ENCODE measurements at regions of chr1 and their contacts with region 1.

Region 1: GRCh38 chr1:165666152-165666825 is 32.1 kb downstream of the ALDH9A1 start:
- DNase-seq: peak; percentile 12 to 42 (median 16)
- H3K4me3 ChIP-seq: peak overlapping the region in 2 of 3 experiments; percentile 36 to 58
- H3K4me3 Mint-ChIP-seq: peak overlapping the region in 1 of 2 donors; percentile 70
- H3K27ac ChIP-seq: peak overlapping the region in 1 of 2 donors; percentile 74
- H3K27ac Mint-ChIP-seq: peak overlapping the region; percentile 6 to 89 (median 82)
- H3K4me1 ChIP-seq: peaks cover 37 to 46% of the 10 kb centered on the region in 2 donors
- H3K4me1 Mint-ChIP-seq: peaks cover 47% of the 10 kb centered on the region
- H3K27me3 ChIP-seq: no peaks in the 10 kb centered on the region
- H3K27me3 Mint-ChIP-seq: no peaks in the 10 kb centered on the region
- CTCF ChIP-seq: no peak

Region 2: GRCh38 chr1:165697881-165698760 is 31.8 kb after region 1 on chr1 and contains the start of gene ALDH9A1:
- intact Hi-C with region 1: loop called in 1 of 2 experiments (anchors 5 kb)
- DNase-seq: peak; percentile 51 to 68 (median 57)
- H3K4me3 ChIP-seq: peak within 1 kb of the TSS; percentile 81 to 99 (median 89)
- H3K4me3 Mint-ChIP-seq: peak within 1 kb of the TSS; percentile 94 to 98
- H3K27ac ChIP-seq: peak within 1 kb of the TSS; percentile 91 to 93
- H3K27ac Mint-ChIP-seq: peak within 1 kb of the TSS; percentile 90 to 97 (median 96)
- H3K4me1 ChIP-seq: peaks cover 27 to 32% of the 10 kb centered on the region in 2 donors
- H3K4me1 Mint-ChIP-seq: peaks cover 30% of the 10 kb centered on the region
- H3K27me3 ChIP-seq: no peaks in the 10 kb centered on the region
- H3K27me3 Mint-ChIP-seq: peaks cover 0 to 3% (median 0%) of the 10 kb centered on the region in 3 donors
- CTCF ChIP-seq: peak; percentile 19
- polyA plus RNA-seq, gene ALDH9A1: 23.7 to 60.0 (median 57.7) TPM

Measured in CD14-positive monocyte (primary cell).